ENCODE measurements at regions of chr10 and their contacts with region 1.

Region 1: DNA sequence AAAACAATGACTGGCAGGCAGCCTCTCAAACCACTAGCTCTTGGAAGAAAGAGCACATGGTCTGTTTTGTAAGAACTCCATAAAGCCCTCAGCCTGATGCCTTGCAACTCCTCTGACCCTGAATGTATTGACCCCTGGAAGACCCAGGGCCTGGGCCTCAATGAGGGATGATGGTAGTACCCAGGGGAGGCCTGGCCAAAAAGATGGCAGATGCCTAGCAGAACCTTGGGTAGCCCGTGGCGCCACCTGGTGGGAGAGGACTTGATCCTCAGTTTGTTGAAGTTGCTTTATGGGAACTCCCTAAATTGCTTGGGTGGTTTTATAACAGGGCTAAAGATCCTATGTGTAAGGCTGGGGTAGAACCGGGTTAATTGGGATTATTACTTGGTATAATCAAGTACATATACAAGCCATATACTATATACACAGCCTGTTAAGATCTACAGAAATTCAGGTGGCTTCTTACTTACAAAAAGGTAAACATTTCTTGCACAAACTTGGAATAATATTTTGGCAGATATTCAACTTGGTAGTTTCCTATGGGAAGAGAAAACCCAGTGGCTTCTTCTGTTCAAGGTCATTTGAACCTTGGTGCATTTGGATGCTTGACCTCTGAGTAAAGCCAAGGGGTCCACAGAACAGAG is 95.8 kb upstream of the CACUL1 start:
- DNase-seq: peak; percentile 88
- ATAC-seq: peak; percentile 97
- H3K4me3 ChIP-seq: no peak overlapping the region
- H3K27ac ChIP-seq: no peak overlapping the region
- H3K4me1 ChIP-seq: peaks cover 0 to 6% of the 10 kb centered on the region in 2 experiments; a peak in 2 of 4 replicates
- H3K27me3 ChIP-seq: no peaks in the 10 kb centered on the region
- CTCF ChIP-seq: peak; percentile 95 to 99 (median 98)
- POLR2A ChIP-seq: no peak
- RAD21 ChIP-seq: peak; percentile 97

Region 2: GRCh38 chr10:118522791-118523498 is 327.6 kb before region 1 on chr10:
- CTCF ChIA-PET with region 1: no interaction called
- POLR2A ChIA-PET with region 1: no interaction called
- RAD21 ChIA-PET with region 1: no interaction called
- intact Hi-C with region 1: no loop called
- DNase-seq: peak; percentile 29
- ATAC-seq: peak; percentile 80
- H3K4me3 ChIP-seq: peak overlapping the region in 1 of 2 experiments; percentile 0; a peak in 1 of 4 replicates
- H3K27ac ChIP-seq: no peak overlapping the region
- H3K4me1 ChIP-seq: peaks cover 13 to 19% of the 10 kb centered on the region in 2 experiments
- H3K27me3 ChIP-seq: no peaks in the 10 kb centered on the region
- CTCF ChIP-seq: no peak
- POLR2A ChIP-seq: no peak
- RAD21 ChIP-seq: no peak

Region 3: GRCh38 chr10:118748041-118748440 is 102.5 kb before region 1 on chr10:
- CTCF ChIA-PET with region 1: no interaction called
- POLR2A ChIA-PET with region 1: no interaction called
- RAD21 ChIA-PET with region 1: no interaction called
- intact Hi-C with region 1: no loop called
- DNase-seq: no peak
- ATAC-seq: no peak
- H3K4me3 ChIP-seq: no peak overlapping the region
- H3K27ac ChIP-seq: no peak overlapping the region
- H3K4me1 ChIP-seq: peaks cover 2 to 18% of the 10 kb centered on the region in 2 experiments; a peak in 3 of 4 replicates
- H3K27me3 ChIP-seq: no peaks in the 10 kb centered on the region
- CTCF ChIP-seq: no peak
- POLR2A ChIP-seq: no peak
- RAD21 ChIP-seq: no peak

Region 4: DNA sequence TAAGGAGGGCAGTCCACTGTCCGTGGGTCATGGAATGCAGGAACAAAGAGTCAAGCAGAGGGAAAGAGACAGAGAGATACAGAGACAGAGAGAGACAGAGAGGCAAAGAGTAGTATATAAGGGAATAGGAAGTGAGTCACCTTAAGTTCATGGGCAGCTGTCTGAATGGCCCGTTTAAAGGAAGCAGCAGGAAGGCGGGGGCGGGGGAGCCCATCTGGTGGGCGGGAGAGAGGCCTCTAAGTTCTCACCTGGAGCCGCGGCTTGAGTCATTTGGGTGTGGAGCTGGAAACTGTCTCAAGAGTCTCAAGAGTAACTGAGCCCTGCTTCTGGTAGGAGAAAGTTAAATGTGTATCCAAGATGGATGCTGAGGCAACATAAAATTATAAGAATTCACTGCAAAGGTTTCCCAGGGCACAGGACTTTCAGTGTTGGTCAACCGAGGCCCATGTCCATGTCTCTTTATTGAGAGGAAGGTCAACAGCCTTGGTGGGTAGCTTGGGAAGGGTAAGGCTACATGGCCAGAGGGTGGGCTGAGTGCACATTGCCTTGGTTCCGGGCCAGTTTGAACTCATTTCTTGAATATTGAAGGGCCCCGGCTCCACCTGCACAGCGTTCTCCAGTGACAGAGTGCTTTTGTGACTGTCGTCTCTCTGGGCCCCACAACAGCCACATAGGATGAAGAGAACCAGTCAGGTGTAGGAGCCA is 10.3 kb before region 1 on chr10:
- CTCF ChIA-PET with region 1: interaction called, 16 read pairs
- POLR2A ChIA-PET with region 1: interaction called, 4 read pairs
- RAD21 ChIA-PET with region 1: no interaction called
- intact Hi-C with region 1: no loop called
- DNase-seq: peak; percentile 95
- ATAC-seq: peak; percentile 74
- H3K4me3 ChIP-seq: peak overlapping the region; percentile 44 to 57
- H3K27ac ChIP-seq: peak overlapping the region; percentile 42
- H3K4me1 ChIP-seq: peaks cover 40 to 71% of the 10 kb centered on the region in 2 experiments
- H3K27me3 ChIP-seq: no peaks in the 10 kb centered on the region
- CTCF ChIP-seq: no peak
- POLR2A ChIP-seq: no peak
- RAD21 ChIP-seq: no peak